CD4-positive, alpha-beta memory T cell (primary cell): ENCODE measurements at regions of chr9 and their contacts with region 1.

Region 1: GRCh38 chr9:114082017-114082762 is 4.1 kb upstream of the AMBP start:
- DNase-seq: peak; percentile 61 to 68 (median 66)
- H3K4me3 ChIP-seq: no peak overlapping the region
- H3K4me3 Mint-ChIP-seq: no peak overlapping the region
- H3K27ac ChIP-seq: no peak overlapping the region
- H3K27ac Mint-ChIP-seq: no peak overlapping the region
- H3K4me1 ChIP-seq: no peaks in the 10 kb centered on the region
- H3K4me1 Mint-ChIP-seq: peaks cover 0 to 4% (median 2%) of the 10 kb centered on the region in 4 donors
- H3K27me3 ChIP-seq: no peaks in the 10 kb centered on the region
- H3K27me3 Mint-ChIP-seq: peaks cover under 1 to 5% of the 10 kb centered on the region in 2 donors

Region 2: DNA sequence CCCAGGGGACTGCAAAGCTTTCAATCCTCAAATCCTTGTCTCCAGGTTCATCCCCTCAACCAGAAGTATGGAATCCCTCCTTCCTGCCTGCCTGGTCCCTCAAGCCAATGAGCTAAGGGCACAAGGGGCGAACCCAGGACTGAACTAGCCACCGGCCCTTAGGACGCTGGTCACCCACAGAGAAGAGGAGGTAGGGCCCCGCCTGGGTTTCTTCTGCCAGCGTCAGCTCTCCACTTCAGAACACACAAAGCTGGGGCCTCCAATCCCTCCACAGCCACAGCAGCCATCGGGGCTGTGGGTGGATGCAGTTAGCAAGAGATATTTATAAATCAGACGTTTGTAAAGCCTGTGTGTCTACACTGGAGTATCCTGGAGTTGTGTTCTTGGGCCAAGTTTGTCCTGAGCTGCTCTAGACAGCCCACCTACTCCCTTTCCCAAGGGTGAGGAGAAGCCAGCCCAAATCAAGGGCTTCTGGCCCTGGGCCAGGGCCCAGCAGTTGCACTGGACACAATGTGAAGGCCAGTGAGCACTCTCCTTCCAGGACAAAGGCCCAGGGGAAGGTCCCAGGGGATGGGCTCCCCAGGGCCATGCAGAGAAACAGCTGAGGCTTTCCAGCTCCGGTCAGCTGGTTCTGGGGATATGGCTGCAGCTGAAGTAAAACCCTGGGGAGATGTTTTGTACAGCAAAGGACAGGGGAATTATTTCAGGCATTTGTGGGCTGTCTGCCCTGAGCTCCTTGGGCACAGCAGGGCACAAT is 23.0 kb before region 1 on chr9:
- CTCF ChIA-PET with region 1: interaction called, 10 read pairs
- POLR2A ChIA-PET with region 1: no interaction called
- intact Hi-C with region 1: no loop called
- DNase-seq: no peak
- H3K4me3 ChIP-seq: no peak overlapping the region
- H3K4me3 Mint-ChIP-seq: no peak overlapping the region
- H3K27ac ChIP-seq: no peak overlapping the region
- H3K27ac Mint-ChIP-seq: no peak overlapping the region
- H3K4me1 ChIP-seq: no peaks in the 10 kb centered on the region
- H3K4me1 Mint-ChIP-seq: no peaks in the 10 kb centered on the region
- H3K27me3 ChIP-seq: no peaks in the 10 kb centered on the region
- H3K27me3 Mint-ChIP-seq: peaks cover 14 to 17% of the 10 kb centered on the region in 2 donors

Region 3: DNA sequence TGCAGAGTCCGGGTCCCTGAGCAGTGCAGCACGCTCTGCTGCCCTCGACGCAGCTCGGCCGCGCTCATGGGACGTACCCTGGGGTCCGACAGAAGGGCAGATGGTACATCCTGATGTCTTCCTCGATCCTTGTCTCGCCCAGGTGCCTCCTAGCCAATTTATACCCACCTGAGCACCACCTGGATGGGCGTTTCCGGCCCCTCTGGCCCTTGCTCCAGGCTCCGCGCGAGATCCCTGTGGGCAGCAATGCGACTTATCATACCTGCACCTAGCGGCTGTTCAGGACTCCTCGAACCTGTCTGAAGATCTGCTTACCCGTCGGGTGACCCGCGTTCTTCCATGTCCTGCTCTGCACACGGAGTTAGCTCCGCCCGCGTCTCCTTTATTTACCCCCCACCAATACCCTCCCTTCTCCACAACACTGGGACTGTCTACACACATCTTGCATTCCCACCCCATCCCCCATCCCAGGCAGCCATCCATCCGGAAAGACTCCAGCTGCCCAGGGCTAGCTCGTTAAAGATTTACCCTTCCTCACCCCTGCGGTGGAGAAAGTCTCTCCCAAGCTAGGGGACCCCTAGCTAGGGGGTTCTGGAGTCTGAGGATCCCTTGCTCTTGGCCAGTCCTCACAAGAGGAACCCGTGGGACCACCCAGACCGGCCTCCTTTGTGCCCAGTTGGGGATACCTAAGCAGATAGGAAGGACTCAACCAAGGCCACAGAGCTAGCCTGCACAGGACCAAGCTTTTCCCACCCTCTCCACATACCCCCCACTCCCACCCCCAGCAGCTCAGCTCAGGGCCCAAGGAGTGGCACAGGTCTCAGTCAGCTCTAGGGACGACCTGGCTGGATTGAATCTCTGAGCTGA is 17.0 kb after region 1 on chr9 and contains the start of gene KIF12:
- CTCF ChIA-PET with region 1: interaction called, 37 read pairs
- POLR2A ChIA-PET with region 1: no interaction called
- intact Hi-C with region 1: no loop called
- DNase-seq: no peak
- H3K4me3 ChIP-seq: no peak within 1 kb of the TSS
- H3K4me3 Mint-ChIP-seq: peak within 1 kb of the TSS in 5 of 8 donors; percentile 25 to 44 (median 39)
- H3K27ac ChIP-seq: no peak within 1 kb of the TSS
- H3K27ac Mint-ChIP-seq: no peak within 1 kb of the TSS
- H3K4me1 ChIP-seq: peaks cover 5% of the 10 kb centered on the region
- H3K4me1 Mint-ChIP-seq: peaks cover 7 to 14% (median 11%) of the 10 kb centered on the region in 4 donors
- H3K27me3 ChIP-seq: peaks cover 5% of the 10 kb centered on the region
- H3K27me3 Mint-ChIP-seq: peaks cover 32 to 46% of the 10 kb centered on the region in 2 donors
- total RNA-seq, gene KIF12: not detected

Region 4: GRCh38 chr9:114108016-114108833 is 26.0 kb after region 1 on chr9:
- CTCF ChIA-PET with region 1: interaction called, 27 read pairs
- POLR2A ChIA-PET with region 1: no interaction called
- intact Hi-C with region 1: no loop called
- DNase-seq: peak in 4 of 5 donors; percentile 18 to 23 (median 21)
- H3K4me3 ChIP-seq: no peak overlapping the region
- H3K4me3 Mint-ChIP-seq: no peak overlapping the region
- H3K27ac ChIP-seq: no peak overlapping the region
- H3K27ac Mint-ChIP-seq: no peak overlapping the region
- H3K4me1 ChIP-seq: no peaks in the 10 kb centered on the region
- H3K4me1 Mint-ChIP-seq: no peaks in the 10 kb centered on the region
- H3K27me3 ChIP-seq: no peaks in the 10 kb centered on the region
- H3K27me3 Mint-ChIP-seq: peaks cover 8 to 10% of the 10 kb centered on the region in 2 donors

Region 5: DNA sequence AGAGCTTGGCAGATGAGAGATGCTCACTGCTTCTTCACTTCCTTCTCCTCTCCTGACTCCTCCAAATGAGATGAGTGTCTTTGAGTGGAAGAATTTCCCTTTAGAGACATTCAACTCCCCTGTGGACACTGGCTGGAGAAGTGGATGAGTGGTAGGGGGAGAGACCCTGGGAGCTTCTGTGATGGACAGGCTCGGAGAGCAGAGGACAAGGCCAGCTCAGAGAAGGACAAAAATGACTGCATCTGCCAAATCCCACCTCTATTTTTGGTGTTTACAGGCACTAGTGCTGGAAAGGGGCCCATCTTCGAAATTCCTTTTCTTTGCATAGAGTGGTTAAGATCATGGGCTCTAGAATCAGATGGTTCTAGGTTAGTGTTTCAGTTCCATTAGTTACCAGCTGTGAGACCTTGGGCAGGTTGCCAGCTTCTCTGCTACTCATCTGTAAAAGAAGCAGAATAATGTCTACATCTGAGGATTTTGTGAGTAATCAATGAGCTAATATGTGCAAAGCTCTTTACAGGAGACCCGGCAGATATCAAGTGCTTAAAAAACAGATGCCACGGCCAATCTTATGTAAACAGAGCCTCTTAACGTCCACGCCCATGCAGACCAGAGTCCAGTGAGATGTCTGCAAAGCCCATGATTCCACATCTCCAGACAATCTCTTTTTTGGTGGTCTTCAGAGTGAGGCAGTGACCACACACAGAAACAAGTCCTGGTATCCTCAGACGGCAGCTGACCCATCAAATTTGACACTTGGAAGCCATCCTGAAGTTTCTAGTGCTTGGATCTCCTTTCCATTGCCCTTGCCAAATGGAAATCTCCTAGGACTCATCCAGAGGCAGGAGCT is 59.6 kb after region 1 on chr9:
- CTCF ChIA-PET with region 1: no interaction called
- POLR2A ChIA-PET with region 1: no interaction called
- intact Hi-C with region 1: no loop called
- DNase-seq: no peak
- H3K4me3 ChIP-seq: no peak overlapping the region
- H3K4me3 Mint-ChIP-seq: no peak overlapping the region
- H3K27ac ChIP-seq: no peak overlapping the region
- H3K27ac Mint-ChIP-seq: no peak overlapping the region
- H3K4me1 ChIP-seq: no peaks in the 10 kb centered on the region
- H3K4me1 Mint-ChIP-seq: no peaks in the 10 kb centered on the region
- H3K27me3 ChIP-seq: no peaks in the 10 kb centered on the region
- H3K27me3 Mint-ChIP-seq: peaks cover 15 to 31% of the 10 kb centered on the region in 2 donors

Region 6: DNA sequence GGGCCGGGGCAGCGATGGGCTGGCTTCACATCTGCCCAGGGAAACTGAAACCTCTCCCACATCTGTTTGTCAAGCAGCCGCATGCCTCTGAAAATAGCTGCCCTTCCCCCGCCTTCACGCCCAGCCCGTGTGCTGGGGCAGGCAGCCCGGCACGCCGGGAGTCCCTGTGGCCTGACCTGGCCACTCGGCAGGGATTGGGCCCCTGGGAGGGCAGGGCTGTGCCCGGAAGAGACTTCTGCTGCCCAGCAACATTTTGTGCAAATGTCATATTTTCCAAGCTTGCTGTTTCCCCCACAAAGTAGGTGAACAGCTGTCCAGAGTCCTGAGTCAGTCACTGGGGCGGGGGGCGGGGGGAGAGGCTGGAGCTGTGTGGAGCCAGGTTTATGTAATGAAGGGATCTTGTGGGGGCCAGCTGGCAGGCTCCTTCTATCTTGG is 81.3 kb after region 1 on chr9:
- CTCF ChIA-PET with region 1: no interaction called
- POLR2A ChIA-PET with region 1: no interaction called
- intact Hi-C with region 1: no loop called
- DNase-seq: no peak
- H3K4me3 ChIP-seq: no peak overlapping the region
- H3K4me3 Mint-ChIP-seq: no peak overlapping the region
- H3K27ac ChIP-seq: no peak overlapping the region
- H3K27ac Mint-ChIP-seq: no peak overlapping the region
- H3K4me1 ChIP-seq: no peaks in the 10 kb centered on the region
- H3K4me1 Mint-ChIP-seq: peaks cover 0 to 1% (median 0%) of the 10 kb centered on the region in 4 donors
- H3K27me3 ChIP-seq: no peaks in the 10 kb centered on the region
- H3K27me3 Mint-ChIP-seq: peaks cover 2 to 4% of the 10 kb centered on the region in 2 donors

Region 7: GRCh38 chr9:114291064-114291474 is 208.9 kb after region 1 on chr9:
- CTCF ChIA-PET with region 1: interaction called, 47 read pairs
- POLR2A ChIA-PET with region 1: no interaction called
- intact Hi-C with region 1: no loop called
- DNase-seq: peak in 4 of 5 donors; percentile 53 to 62 (median 58)
- H3K4me3 ChIP-seq: no peak overlapping the region
- H3K4me3 Mint-ChIP-seq: no peak overlapping the region
- H3K27ac ChIP-seq: no peak overlapping the region
- H3K27ac Mint-ChIP-seq: peak overlapping the region in 3 of 7 donors; percentile 8 to 57 (median 49)
- H3K4me1 ChIP-seq: no peaks in the 10 kb centered on the region
- H3K4me1 Mint-ChIP-seq: peaks cover 2 to 6% (median 5%) of the 10 kb centered on the region in 4 donors
- H3K27me3 ChIP-seq: no peaks in the 10 kb centered on the region
- H3K27me3 Mint-ChIP-seq: peaks cover 3 to 7% of the 10 kb centered on the region in 2 donors